Tibial artery (tissue), 4 donors: ENCODE measurements at regions of chr2 and their contacts with region 1.

Region 1: GRCh38 chr2:239401067-239401880 is 454 bp upstream of the HDAC4 start:
- DNase-seq: peak; percentile 98 to 100
- H3K4me3 ChIP-seq: peak overlapping the region; percentile 69 to 85
- H3K27ac ChIP-seq: peak overlapping the region; percentile 97 to 98
- H3K4me1 ChIP-seq: peaks cover 0 to 32% (median 12%) of the 10 kb centered on the region in 4 donors
- H3K27me3 ChIP-seq: peaks cover 0 to 2% of the 10 kb centered on the region in 2 donors
- CTCF ChIP-seq: peak in 1 of 2 experiments; percentile 24

Region 2: GRCh38 chr2:239049421-239050251 is 351.6 kb before region 1 on chr2:
- intact Hi-C with region 1: loop called (anchors 10 kb)
- DNase-seq: no peak
- H3K4me3 ChIP-seq: no peak overlapping the region
- H3K27ac ChIP-seq: no peak overlapping the region
- H3K4me1 ChIP-seq: no peaks in the 10 kb centered on the region
- H3K27me3 ChIP-seq: no peaks in the 10 kb centered on the region
- CTCF ChIP-seq: no peak

Region 3: GRCh38 chr2:239149501-239149900 is 251.8 kb before region 1 on chr2:
- intact Hi-C with region 1: loop called (anchors 5 kb)
- DNase-seq: peak; percentile 12 to 56
- H3K4me3 ChIP-seq: no peak overlapping the region
- H3K27ac ChIP-seq: no peak overlapping the region
- H3K4me1 ChIP-seq: peaks cover 0 to 4% (median 0%) of the 10 kb centered on the region in 4 donors
- H3K27me3 ChIP-seq: no peaks in the 10 kb centered on the region
- CTCF ChIP-seq: no peak

Region 4: DNA sequence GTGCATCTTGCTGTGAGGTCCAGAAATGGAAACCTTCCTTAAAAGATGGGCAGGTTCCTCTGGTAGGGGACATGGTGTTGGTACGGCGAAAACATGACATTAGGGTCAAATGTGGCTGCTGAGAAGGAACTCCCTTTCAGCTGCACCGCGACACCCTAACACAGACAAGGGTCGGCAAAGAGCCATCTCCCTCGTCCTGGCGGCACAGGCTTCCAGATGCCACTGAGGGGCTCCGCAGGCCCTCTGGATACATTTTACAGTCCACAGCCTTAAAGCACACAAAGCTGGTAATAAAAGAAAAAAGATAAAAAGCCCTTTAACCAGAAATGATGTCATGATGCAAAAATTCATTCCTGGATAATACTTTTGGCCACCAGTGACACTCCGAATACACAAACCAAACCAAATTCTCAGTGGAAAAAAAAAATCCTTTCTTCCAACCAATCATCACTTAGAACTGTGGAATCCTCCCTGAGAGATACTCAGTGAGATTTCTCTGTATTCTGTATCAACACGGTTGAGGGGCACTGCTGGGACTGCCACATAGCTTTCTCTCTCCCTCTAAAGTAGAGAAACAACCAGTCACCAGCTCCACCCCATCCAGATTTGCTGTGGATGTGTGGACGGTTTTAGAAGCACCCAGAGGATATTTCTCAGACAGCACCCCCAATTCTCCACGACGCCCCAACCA is 175.3 kb before region 1 on chr2:
- intact Hi-C with region 1: loop called (anchors 5 kb)
- DNase-seq: peak; percentile 51 to 62
- H3K4me3 ChIP-seq: no peak overlapping the region
- H3K27ac ChIP-seq: peak overlapping the region; percentile 81 to 89
- H3K4me1 ChIP-seq: peaks cover 0 to 67% (median 60%) of the 10 kb centered on the region in 4 donors
- H3K27me3 ChIP-seq: no peaks in the 10 kb centered on the region
- CTCF ChIP-seq: no peak

Region 5: DNA sequence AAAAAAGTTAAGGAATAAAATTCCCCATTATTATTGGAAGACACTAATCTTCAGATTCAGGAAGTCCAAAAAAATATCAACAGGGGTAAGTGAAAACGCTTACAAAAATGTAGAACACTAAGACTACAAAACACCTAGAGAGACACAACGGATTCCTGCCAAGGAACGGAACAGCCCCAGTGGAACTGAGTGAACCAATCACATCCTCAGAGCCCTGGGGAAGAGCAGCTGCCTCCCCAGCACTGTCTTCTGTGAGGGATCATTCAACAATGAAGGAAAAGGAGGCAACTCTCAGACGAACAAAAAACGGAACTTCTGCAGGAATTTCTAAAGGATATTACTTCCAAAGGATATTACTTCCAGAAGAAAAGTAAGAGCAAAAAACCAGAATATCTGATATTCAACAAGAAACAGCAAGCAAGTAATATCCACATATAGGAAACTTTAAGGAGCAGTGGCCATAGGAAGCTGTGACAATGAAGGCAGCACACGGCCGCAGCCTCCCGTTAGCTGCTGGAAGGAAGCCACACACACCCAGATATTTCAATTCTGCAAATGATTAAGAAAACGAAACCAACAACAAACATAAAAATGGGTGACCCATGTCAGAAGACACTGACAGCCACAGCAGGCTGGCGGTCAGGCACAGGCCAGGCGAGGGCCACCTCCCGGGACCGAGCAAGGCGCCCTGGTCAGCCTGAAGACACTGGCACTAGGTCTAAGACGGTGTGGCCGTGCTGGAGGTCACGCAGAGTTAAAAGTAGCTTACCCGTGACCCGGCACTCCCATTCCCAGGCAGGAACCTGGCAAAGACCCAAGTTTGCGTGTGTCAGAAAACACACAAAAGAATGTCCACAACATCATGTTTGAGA is 82.2 kb before region 1 on chr2:
- intact Hi-C with region 1: loop called (anchors 10 kb)
- DNase-seq: peak; percentile 17 to 53
- H3K4me3 ChIP-seq: peak overlapping the region; percentile 2 to 20
- H3K27ac ChIP-seq: peak overlapping the region in 1 of 2 donors; percentile 3
- H3K4me1 ChIP-seq: peaks cover 0 to 28% (median 11%) of the 10 kb centered on the region in 4 donors
- H3K27me3 ChIP-seq: no peaks in the 10 kb centered on the region
- CTCF ChIP-seq: no peak

Region 6: GRCh38 chr2:239328351-239329191 is 72.7 kb before region 1 on chr2:
- intact Hi-C with region 1: loop called (anchors 2 kb)
- DNase-seq: peak; percentile 68 to 89
- H3K4me3 ChIP-seq: no peak overlapping the region
- H3K27ac ChIP-seq: peak overlapping the region; percentile 75 to 78
- H3K4me1 ChIP-seq: peaks cover 0 to 38% (median 31%) of the 10 kb centered on the region in 4 donors
- H3K27me3 ChIP-seq: no peaks in the 10 kb centered on the region
- CTCF ChIP-seq: no peak

Region 7: DNA sequence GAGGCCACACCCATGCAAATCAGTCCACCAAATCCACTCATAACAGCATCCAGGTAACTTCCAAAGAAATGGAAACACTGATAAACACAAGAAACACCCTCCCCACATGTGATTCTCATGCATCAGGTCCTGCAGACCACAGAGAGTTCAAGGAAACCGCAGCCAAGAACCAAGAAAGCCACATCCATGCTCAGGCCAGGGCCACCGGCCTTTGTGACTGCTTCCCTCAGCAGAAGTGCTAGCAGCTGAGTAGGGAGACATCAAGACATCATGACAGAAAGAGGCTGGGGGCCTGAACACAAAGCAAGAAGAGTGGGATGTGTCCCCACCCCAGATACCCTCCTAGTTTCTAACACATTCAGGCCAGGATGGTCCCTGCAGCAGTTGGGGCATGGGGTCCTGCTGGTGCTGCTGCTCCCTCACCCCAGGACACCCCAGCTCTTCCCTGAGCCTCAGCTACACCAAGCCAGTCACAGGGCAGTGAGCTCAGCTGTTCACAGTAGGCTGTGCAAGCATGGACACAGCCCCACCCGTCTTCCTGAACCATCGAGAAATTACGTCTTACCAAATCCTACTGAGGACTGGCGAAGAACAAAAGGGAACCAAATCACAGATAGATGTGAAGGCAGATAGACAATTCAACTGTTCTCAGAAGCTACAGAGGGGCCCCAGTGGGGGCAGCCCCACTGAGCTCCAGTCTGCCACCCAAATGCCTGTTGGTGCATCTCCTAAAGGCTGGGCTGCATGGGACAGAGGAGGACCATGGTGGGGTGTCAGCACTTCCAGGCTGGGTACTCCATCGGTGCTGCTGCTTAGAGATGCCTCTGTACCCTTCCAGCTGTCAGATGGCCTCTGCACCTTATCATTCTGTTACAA is 61.3 kb before region 1 on chr2:
- intact Hi-C with region 1: no loop called
- DNase-seq: no peak
- H3K4me3 ChIP-seq: no peak overlapping the region
- H3K27ac ChIP-seq: no peak overlapping the region
- H3K4me1 ChIP-seq: no peaks in the 10 kb centered on the region
- H3K27me3 ChIP-seq: no peaks in the 10 kb centered on the region
- CTCF ChIP-seq: no peak

Region 8: GRCh38 chr2:239763433-239764097 is 362.3 kb after region 1 on chr2:
- intact Hi-C with region 1: no loop called
- DNase-seq: peak in 1 of 2 donors; percentile 46
- H3K4me3 ChIP-seq: no peak overlapping the region
- H3K27ac ChIP-seq: no peak overlapping the region
- H3K4me1 ChIP-seq: peaks cover 0 to 18% (median 6%) of the 10 kb centered on the region in 4 donors
- H3K27me3 ChIP-seq: no peaks in the 10 kb centered on the region
- CTCF ChIP-seq: no peak